H1 (cell line): ENCODE measurements at regions of chr3 and their contacts with region 1.

Region 1: DNA sequence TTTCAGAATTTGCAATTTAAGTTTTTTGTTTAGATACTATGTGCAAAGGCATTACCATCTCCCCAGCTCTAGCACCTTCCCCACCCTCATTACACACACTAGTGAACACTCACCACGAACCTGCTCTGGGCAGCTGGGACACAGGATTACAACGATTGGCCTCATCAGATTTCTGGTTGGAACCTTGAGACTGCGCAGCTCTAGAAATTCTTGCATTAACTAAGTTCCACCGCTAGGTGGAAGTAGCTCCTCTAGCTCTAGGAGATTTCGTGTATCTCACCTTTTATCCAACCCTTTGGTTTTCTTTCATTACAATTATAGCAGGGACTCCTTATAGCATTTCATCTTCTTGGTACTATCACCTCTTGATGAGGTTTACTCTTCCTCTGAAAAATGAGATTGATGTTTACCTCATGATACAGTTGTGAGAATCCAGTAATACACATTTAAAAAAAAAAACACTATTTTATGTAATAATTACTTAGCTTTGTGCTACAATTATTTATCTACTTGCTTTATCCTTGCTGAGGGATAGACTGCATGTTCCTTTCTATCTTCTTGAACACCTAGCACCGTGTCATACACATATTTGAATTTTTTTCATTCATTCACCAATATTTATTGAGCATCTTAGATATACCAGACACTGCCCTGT is 28.7 kb upstream of the PLOD2 start:
- DNase-seq: peak in 1 of 2 experiments; percentile 48
- H3K4me3 ChIP-seq: no peak overlapping the region
- H3K27ac ChIP-seq: no peak overlapping the region
- H3K4me1 ChIP-seq: peaks cover 0 to 2% (median 0%) of the 10 kb centered on the region in 4 experiments; a peak in 1 of 7 replicates
- H3K27me3 ChIP-seq: no peaks in the 10 kb centered on the region
- CTCF ChIP-seq: peak in 2 of 3 experiments; percentile 75 to 79; a peak in 3 of 4 replicates
- EP300 ChIP-seq: no peak
- POLR2A ChIP-seq: no peak
- RAD21 ChIP-seq: peak; percentile 84 to 89

Region 2: GRCh38 chr3:146072824-146073223 is 116.8 kb before region 1 on chr3:
- CTCF ChIA-PET with region 1: interaction called, 19 read pairs
- POLR2A ChIA-PET with region 1: no interaction called
- DNase-seq: no peak
- H3K4me3 ChIP-seq: no peak overlapping the region
- H3K27ac ChIP-seq: no peak overlapping the region
- H3K4me1 ChIP-seq: no peaks in the 10 kb centered on the region
- H3K27me3 ChIP-seq: no peaks in the 10 kb centered on the region
- CTCF ChIP-seq: no peak
- EP300 ChIP-seq: no peak
- POLR2A ChIP-seq: no peak
- RAD21 ChIP-seq: no peak

Region 3: GRCh38 chr3:146177519-146177918 is 12.1 kb before region 1 on chr3:
- CTCF ChIA-PET with region 1: interaction called, 46 read pairs
- POLR2A ChIA-PET with region 1: no interaction called
- DNase-seq: no peak
- H3K4me3 ChIP-seq: no peak overlapping the region
- H3K27ac ChIP-seq: no peak overlapping the region
- H3K4me1 ChIP-seq: no peaks in the 10 kb centered on the region
- H3K27me3 ChIP-seq: no peaks in the 10 kb centered on the region
- CTCF ChIP-seq: no peak
- EP300 ChIP-seq: no peak
- POLR2A ChIP-seq: no peak
- RAD21 ChIP-seq: no peak

Region 4: DNA sequence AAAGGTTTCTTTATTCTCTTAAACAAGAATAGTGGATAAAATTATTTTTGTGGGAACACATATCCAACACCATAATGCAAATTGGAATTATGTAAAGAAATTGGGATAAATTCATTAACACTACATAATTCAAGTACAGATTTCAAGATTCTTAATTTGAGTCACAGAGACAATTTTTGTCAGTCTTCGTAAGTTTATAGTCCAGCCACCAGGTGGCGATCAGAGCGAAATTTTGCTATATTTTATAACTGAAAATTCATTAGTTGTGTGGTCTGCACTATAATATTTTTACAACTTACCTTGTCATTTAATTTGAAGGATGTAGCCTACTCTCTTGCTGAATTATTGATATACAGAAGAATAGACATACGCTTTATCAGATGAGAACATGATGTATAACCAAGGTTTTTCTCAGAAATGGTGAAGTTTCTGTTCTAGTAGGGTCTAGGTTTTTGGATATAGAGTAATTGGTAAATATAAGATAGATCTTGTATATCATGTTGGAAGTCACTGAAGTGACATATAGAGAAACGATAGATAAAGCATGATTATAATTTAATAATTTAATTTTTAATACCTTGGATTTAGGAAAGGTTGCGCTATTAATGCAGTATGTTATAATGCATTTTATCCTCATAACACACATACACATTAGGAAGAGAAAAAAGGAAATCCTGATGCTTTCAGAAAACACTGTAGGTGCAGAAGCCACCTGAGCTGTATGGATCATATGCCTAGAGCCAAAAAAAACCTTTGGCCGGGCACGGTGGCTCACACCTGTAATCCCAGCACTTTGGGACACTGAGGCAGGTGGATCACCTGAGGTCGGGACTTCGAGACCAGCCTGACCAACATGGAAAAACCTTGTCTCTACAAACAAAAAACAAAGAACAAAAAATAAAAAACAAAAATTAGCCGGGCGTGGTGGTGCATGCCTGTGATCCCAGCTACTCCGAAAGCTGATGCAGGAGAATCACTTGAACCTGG is 29.5 kb after region 1 on chr3:
- CTCF ChIA-PET with region 1: interaction called, 15 read pairs
- POLR2A ChIA-PET with region 1: no interaction called
- DNase-seq: no peak
- H3K4me3 ChIP-seq: no peak overlapping the region
- H3K27ac ChIP-seq: no peak overlapping the region
- H3K4me1 ChIP-seq: no peaks in the 10 kb centered on the region
- H3K27me3 ChIP-seq: no peaks in the 10 kb centered on the region
- CTCF ChIP-seq: peak in 2 of 3 experiments; percentile 31 to 46; a peak in 2 of 4 replicates
- EP300 ChIP-seq: no peak
- POLR2A ChIP-seq: no peak
- RAD21 ChIP-seq: peak; percentile 56 to 67

Region 5: DNA sequence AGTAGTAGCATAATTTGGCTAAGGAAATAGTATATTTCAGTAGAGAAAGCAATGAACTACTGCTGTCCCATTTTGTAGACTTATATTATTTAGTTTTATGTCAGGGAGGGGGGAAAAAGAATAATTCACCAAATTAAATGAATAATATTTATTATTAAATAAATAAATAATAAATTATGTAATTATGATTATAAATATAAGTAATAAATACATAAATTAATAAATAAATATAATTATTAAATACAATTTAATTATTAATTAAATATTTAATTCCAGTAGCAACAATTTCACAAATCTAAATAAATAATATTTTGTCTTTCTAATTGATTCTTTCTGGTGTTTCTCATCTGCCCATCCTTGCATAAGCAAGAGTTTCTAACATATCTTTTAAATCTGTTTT is 142.3 kb after region 1 on chr3:
- CTCF ChIA-PET with region 1: interaction called, 42 read pairs
- POLR2A ChIA-PET with region 1: no interaction called
- DNase-seq: no peak
- H3K4me3 ChIP-seq: no peak overlapping the region
- H3K27ac ChIP-seq: no peak overlapping the region
- H3K4me1 ChIP-seq: no peaks in the 10 kb centered on the region
- H3K27me3 ChIP-seq: no peaks in the 10 kb centered on the region
- CTCF ChIP-seq: no peak
- EP300 ChIP-seq: no peak
- POLR2A ChIP-seq: no peak
- RAD21 ChIP-seq: no peak

Region 6: GRCh38 chr3:146577662-146578061 is 388.0 kb after region 1 on chr3:
- CTCF ChIA-PET with region 1: interaction called, 30 read pairs
- POLR2A ChIA-PET with region 1: no interaction called
- DNase-seq: no peak
- H3K4me3 ChIP-seq: no peak overlapping the region
- H3K27ac ChIP-seq: no peak overlapping the region
- H3K4me1 ChIP-seq: no peaks in the 10 kb centered on the region
- H3K27me3 ChIP-seq: no peaks in the 10 kb centered on the region
- CTCF ChIP-seq: peak in 2 of 3 experiments; percentile 22 to 28; a peak in 2 of 4 replicates
- EP300 ChIP-seq: no peak
- POLR2A ChIP-seq: no peak
- RAD21 ChIP-seq: peak; percentile 72 to 77

Region 7: GRCh38 chr3:146640955-146641867 is 451.6 kb after region 1 on chr3:
- CTCF ChIA-PET with region 1: interaction called, 20 read pairs
- POLR2A ChIA-PET with region 1: no interaction called
- DNase-seq: no peak
- H3K4me3 ChIP-seq: no peak overlapping the region
- H3K27ac ChIP-seq: no peak overlapping the region
- H3K4me1 ChIP-seq: no peaks in the 10 kb centered on the region; a peak in 2 of 7 replicates
- H3K27me3 ChIP-seq: no peaks in the 10 kb centered on the region
- CTCF ChIP-seq: peak in 2 of 3 experiments; percentile 63 to 73; a peak in 2 of 4 replicates
- EP300 ChIP-seq: no peak
- POLR2A ChIP-seq: no peak
- RAD21 ChIP-seq: peak; percentile 88 to 93

Region 8: DNA sequence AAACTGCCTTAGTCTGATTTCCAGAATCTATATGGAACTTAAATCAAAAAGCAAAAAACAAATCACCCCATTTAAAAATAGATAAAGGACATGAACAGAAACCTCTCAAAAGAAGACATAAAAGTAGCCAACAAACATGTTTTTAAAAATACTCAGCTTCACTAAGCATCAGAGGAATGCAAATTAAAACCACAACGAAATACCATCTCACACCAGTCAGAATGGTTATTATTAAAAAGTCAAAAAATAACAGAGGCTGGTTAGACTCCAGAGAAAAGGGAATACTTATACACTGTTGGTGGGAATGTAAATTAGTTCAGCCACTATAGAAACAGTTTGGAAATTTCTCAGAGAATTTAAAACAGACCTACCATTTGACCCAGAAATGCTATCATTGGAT is 848.8 kb after region 1 on chr3:
- CTCF ChIA-PET with region 1: no interaction called
- POLR2A ChIA-PET with region 1: no interaction called
- DNase-seq: no peak
- H3K4me3 ChIP-seq: no peak overlapping the region
- H3K27ac ChIP-seq: no peak overlapping the region
- H3K4me1 ChIP-seq: no peaks in the 10 kb centered on the region
- H3K27me3 ChIP-seq: no peaks in the 10 kb centered on the region
- CTCF ChIP-seq: no peak
- EP300 ChIP-seq: no peak
- POLR2A ChIP-seq: no peak
- RAD21 ChIP-seq: no peak